CD8-positive, alpha-beta T cell (primary cell): ENCODE measurements at regions of chr3 and their contacts with region 1.

Region 1: GRCh38 chr3:117710501-117710900 is 1000.9 kb downstream of the TUSC7 start:
- DNase-seq: no peak
- ATAC-seq: no peak
- H3K4me3 ChIP-seq: no peak overlapping the region
- H3K4me3 Mint-ChIP-seq: no peak overlapping the region
- H3K27ac ChIP-seq: no peak overlapping the region
- H3K27ac Mint-ChIP-seq: no peak overlapping the region
- H3K4me1 ChIP-seq: no peaks in the 10 kb centered on the region
- H3K4me1 Mint-ChIP-seq: no peaks in the 10 kb centered on the region
- H3K27me3 ChIP-seq: no peaks in the 10 kb centered on the region
- H3K27me3 Mint-ChIP-seq: no peaks in the 10 kb centered on the region
- CTCF ChIP-seq: no peak

Region 2: DNA sequence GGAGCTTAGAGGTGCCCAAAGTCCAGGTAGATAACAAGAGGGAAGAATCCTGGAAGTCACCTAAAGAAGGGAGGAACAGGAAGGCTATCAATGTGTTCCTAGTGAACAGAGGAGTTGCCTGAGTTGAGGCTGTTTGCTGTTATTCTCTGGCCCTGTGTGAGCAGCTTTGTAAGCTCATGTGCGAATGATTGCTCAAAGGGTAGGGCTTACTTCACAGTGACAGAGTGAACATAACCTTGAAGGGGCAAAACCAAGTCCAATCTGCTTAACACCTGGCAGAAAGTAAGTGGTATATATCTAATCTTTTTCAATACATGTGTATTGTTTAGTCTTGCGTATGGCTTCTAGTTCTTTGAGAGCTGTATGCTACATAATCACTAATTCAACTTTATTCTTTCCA is 152.6 kb after region 1 on chr3:
- CTCF ChIA-PET with region 1: no interaction called
- POLR2A ChIA-PET with region 1: no interaction called
- intact Hi-C with region 1: loop called in 1 of 2 experiments (anchors 5 kb)
- DNase-seq: no peak
- ATAC-seq: no peak
- H3K4me3 ChIP-seq: no peak overlapping the region
- H3K4me3 Mint-ChIP-seq: no peak overlapping the region
- H3K27ac ChIP-seq: no peak overlapping the region
- H3K27ac Mint-ChIP-seq: no peak overlapping the region
- H3K4me1 ChIP-seq: no peaks in the 10 kb centered on the region
- H3K4me1 Mint-ChIP-seq: no peaks in the 10 kb centered on the region
- H3K27me3 ChIP-seq: no peaks in the 10 kb centered on the region
- H3K27me3 Mint-ChIP-seq: no peaks in the 10 kb centered on the region
- CTCF ChIP-seq: no peak